A673 (cell line): ENCODE measurements at regions of chrX and their contacts with region 1.

Region 1: GRCh38 chrX:120499301-120500072 is 30.4 kb upstream of the LAMP2 start:
- DNase-seq: no peak
- H3K4me3 ChIP-seq: no peak overlapping the region
- H3K27ac ChIP-seq: no peak overlapping the region
- H3K4me1 ChIP-seq: no peaks in the 10 kb centered on the region
- H3K27me3 ChIP-seq: no peaks in the 10 kb centered on the region
- CTCF ChIP-seq: no peak

Region 2: GRCh38 chrX:120358737-120359456 is 140.6 kb before region 1 on chrX:
- CTCF ChIA-PET with region 1: no interaction called
- POLR2A ChIA-PET with region 1: no interaction called
- intact Hi-C with region 1: no loop called
- DNase-seq: peak; percentile 92
- H3K4me3 ChIP-seq: no peak overlapping the region
- H3K27ac ChIP-seq: no peak overlapping the region
- H3K4me1 ChIP-seq: peaks cover 28% of the 10 kb centered on the region
- H3K27me3 ChIP-seq: no peaks in the 10 kb centered on the region
- CTCF ChIP-seq: no peak

Region 3: GRCh38 chrX:120664081-120664480 is 164.6 kb after region 1 on chrX:
- CTCF ChIA-PET with region 1: no interaction called
- POLR2A ChIA-PET with region 1: no interaction called
- intact Hi-C with region 1: loop called (anchors 1 kb)
- DNase-seq: peak; percentile 25
- H3K4me3 ChIP-seq: no peak overlapping the region
- H3K27ac ChIP-seq: no peak overlapping the region
- H3K4me1 ChIP-seq: no peaks in the 10 kb centered on the region
- H3K27me3 ChIP-seq: no peaks in the 10 kb centered on the region
- CTCF ChIP-seq: peak; percentile 36; the same call in 1 of the 2 replicates

Region 4: GRCh38 chrX:120769576-120770341 is 270.3 kb after region 1 on chrX:
- CTCF ChIA-PET with region 1: interaction called, 3 read pairs
- POLR2A ChIA-PET with region 1: no interaction called
- intact Hi-C with region 1: loop called (anchors 2 kb)
- DNase-seq: peak; percentile 73
- H3K4me3 ChIP-seq: no peak overlapping the region
- H3K27ac ChIP-seq: no peak overlapping the region
- H3K4me1 ChIP-seq: no peaks in the 10 kb centered on the region
- H3K27me3 ChIP-seq: no peaks in the 10 kb centered on the region
- CTCF ChIP-seq: peak; percentile 56